ENCODE measurements at regions of chr1 and their contacts with region 1.

Region 1: DNA sequence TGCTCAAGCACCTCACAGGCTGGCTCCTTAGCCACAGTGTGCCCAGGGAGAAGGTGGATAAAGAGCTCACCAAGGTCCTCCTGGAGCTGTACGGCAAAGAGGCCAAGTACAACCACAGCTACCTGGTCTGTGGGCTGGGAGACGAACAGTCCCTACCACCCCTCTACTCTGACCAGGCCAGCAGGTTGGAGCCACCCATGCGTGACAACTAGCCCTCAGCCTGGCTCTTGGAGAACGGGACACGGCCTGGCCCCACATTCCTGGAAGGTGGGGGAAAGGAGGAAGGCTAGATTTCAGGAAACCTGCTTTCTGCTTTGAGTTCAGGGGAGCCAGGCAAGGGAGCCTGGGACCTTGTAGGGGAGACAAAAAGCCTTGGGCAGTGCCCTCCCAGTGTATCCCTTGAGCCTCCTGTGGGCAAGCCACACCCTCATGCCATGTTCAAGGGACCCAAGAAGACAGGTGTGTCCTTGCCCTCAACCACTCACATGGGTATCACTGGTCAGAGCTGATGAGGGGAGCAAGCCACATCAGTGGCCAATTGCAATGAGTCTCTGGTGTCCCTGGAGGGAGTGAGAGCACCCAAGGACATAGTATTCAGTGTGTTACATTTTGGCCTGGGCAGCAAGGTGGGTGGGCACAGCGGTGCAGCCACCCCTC is 27.6 kb downstream of the LUZP1 start:
- DNase-seq: no peak
- ATAC-seq: peak; percentile 49
- H3K4me3 ChIP-seq: no peak overlapping the region
- H3K27ac ChIP-seq: no peak overlapping the region
- H3K4me1 ChIP-seq: no peaks in the 10 kb centered on the region
- H3K27me3 ChIP-seq: no peaks in the 10 kb centered on the region
- CTCF ChIP-seq: no peak
- EP300 ChIP-seq: no peak
- POLR2A ChIP-seq: no peak
- RAD21 ChIP-seq: no peak

Region 2: DNA sequence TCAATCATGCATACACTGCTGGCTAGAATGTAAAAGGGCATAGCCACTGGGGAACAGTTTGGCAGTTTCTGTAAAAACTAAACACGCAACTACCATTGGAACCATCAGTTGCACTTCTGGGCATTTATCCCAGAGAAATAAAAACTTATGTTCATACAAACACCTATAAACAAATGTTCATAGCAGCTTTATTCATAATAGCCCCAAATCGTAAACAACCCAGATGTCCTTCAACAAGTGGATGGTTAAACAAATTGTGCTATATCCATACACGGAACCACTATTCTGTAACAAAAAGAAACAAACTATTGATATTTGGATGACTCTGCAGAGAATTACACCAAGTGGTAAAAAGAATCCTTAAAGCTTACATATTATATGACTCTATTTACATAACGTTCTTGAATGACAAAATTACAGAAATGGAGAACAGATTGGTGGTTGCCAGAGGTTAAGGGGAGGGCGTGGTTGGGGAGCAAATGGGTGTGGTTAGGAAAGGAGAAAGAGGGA is 191.2 kb before region 1 on chr1:
- CTCF ChIA-PET with region 1: no interaction called
- POLR2A ChIA-PET with region 1: no interaction called
- in situ Hi-C with region 1: no loop called
- intact Hi-C with region 1: no loop called
- DNase-seq: no peak
- ATAC-seq: no peak
- H3K4me3 ChIP-seq: no peak overlapping the region
- H3K27ac ChIP-seq: no peak overlapping the region
- H3K4me1 ChIP-seq: peaks cover 0 to 12% of the 10 kb centered on the region in 2 experiments; a peak in 1 of 5 replicates
- H3K27me3 ChIP-seq: peaks cover 21 to 50% of the 10 kb centered on the region in 2 experiments
- CTCF ChIP-seq: no peak
- EP300 ChIP-seq: no peak
- POLR2A ChIP-seq: no peak
- RAD21 ChIP-seq: no peak

Region 3: DNA sequence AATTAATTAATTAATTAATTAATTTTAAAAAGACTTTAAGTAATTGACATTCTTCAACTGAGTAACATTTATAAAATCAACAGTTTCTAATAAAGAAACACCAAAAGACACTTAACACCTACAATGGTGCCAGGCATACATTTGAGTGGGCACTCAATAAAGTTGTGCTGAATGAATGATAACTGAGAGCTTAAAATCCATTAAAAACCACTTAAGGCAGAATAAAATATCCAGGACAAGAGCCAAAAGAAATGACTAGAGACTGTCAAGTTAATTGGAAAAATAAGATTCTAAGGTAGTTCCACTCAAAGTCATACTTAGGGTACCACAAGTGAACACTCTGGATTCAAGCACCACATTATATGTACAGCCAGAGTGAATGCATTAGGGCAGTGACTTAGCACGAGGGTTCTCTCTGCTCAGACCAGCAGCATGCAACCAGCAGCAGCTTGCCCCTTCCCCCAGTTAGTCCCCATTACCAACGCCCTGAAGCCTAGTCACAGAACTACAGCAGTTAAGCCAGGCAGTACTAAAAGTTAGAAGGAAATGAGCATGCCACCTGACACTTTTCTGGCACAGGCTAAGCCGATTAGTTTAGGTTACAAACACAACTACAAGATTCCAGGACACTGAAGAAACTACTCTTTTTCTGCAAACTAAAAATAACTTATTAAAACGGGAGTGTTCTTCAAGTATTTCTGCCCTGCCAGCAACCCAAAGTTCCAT is 18.9 kb before region 1 on chr1:
- CTCF ChIA-PET with region 1: no interaction called
- POLR2A ChIA-PET with region 1: interaction called, 25 read pairs
- in situ Hi-C with region 1: no loop called
- intact Hi-C with region 1: no loop called
- DNase-seq: no peak
- ATAC-seq: peak; percentile 33
- H3K4me3 ChIP-seq: no peak overlapping the region
- H3K27ac ChIP-seq: no peak overlapping the region
- H3K4me1 ChIP-seq: peaks cover 14 to 38% of the 10 kb centered on the region in 2 experiments
- H3K27me3 ChIP-seq: no peaks in the 10 kb centered on the region
- CTCF ChIP-seq: no peak
- EP300 ChIP-seq: no peak
- POLR2A ChIP-seq: no peak
- RAD21 ChIP-seq: no peak